ENCODE measurements at regions of chr16 and their contacts with region 1.

Region 1: DNA sequence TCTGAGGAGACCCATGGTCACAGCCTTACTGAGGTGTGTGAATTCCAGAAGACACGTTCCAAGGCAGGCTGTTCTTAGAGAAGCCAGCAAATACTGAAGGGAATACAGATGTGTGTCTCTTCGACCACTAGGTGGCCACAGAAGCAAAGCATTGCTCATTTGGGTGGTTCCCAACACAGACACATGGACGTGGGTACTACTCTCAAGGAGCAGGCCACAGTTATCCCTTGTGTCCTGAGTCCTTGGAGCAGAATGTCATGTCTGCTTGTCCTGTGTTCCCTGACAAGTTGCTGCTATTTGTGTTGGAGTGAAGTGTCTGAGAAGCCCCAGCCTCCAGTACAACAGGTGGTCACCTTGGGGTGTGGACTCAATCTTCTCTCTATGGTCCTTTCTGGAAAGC is 30.3 kb downstream of the HMOX2 start:
- DNase-seq: peak; percentile 66 to 73 (median 68)
- H3K4me3 ChIP-seq: peak overlapping the region in 1 of 2 donors; percentile 57
- H3K4me3 Mint-ChIP-seq: peak overlapping the region; percentile 49 to 94 (median 80)
- H3K27ac ChIP-seq: peak overlapping the region; percentile 77
- H3K27ac Mint-ChIP-seq: peak overlapping the region; percentile 96 to 100 (median 99)
- H3K4me1 ChIP-seq: peaks cover 67% of the 10 kb centered on the region
- H3K4me1 Mint-ChIP-seq: peaks cover 40 to 77% (median 60%) of the 10 kb centered on the region in 4 donors
- H3K27me3 ChIP-seq: no peaks in the 10 kb centered on the region
- H3K27me3 Mint-ChIP-seq: no peaks in the 10 kb centered on the region

Region 2: DNA sequence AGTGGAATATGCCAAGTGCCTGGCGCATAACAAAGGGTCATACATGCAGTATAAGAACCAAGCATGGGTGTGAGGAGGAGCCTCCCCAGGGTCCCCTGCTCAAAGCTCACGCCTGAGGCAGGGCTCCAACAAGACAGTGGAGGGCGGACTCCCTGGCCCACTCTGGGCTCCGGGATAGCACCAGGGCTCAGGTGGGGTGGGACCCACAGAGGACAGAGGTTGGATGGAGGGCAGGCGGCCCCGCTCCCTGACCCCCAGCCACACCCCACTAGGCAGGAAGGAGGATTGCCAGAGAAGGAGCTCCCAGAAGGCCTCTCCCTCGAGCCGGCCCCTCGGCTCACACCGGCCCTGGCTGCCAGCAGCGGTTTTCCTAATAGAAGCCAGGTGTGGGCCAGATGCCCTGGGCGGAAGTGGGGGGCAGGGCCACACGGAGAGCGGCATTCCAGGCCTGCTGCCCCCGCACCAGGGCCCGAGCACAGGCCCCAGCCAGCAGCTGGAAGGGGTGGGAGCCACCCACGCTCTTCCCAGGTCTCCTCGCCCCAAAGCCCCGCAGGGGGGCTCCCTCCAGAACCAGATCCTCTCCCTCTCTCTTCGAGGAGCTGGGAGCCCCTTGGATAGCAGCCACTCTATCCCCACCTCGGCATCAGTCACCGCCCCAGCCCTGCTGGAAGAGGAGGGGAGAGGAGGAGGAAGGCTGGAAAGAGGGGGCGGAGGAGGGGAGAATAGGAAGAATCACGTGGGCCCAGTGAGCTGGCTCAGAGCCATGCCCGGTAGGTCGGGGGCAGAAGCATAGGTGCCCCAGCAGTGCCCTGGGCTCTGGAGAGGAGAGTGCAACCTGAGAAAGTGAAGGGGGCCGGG is 113.8 kb before region 1 on chr16:
- CTCF ChIA-PET with region 1: no interaction called
- POLR2A ChIA-PET with region 1: no interaction called
- intact Hi-C with region 1: no loop called
- DNase-seq: no peak
- H3K4me3 ChIP-seq: no peak overlapping the region
- H3K4me3 Mint-ChIP-seq: no peak overlapping the region
- H3K27ac ChIP-seq: no peak overlapping the region
- H3K27ac Mint-ChIP-seq: peak overlapping the region in 3 of 7 donors; percentile 29 to 93 (median 68)
- H3K4me1 ChIP-seq: no peaks in the 10 kb centered on the region
- H3K4me1 Mint-ChIP-seq: peaks cover 4 to 11% (median 5%) of the 10 kb centered on the region in 4 donors
- H3K27me3 ChIP-seq: no peaks in the 10 kb centered on the region
- H3K27me3 Mint-ChIP-seq: no peaks in the 10 kb centered on the region

Region 3: GRCh38 chr16:4416200-4417032 is 90.0 kb before region 1 on chr16 and contains the start of gene CORO7:
- CTCF ChIA-PET with region 1: interaction called, 6 read pairs
- POLR2A ChIA-PET with region 1: interaction called, 32 read pairs
- intact Hi-C with region 1: no loop called
- DNase-seq: peak; percentile 99 to 100 (median 100)
- H3K4me3 ChIP-seq: peak within 1 kb of the TSS; percentile 75 to 81
- H3K4me3 Mint-ChIP-seq: peak within 1 kb of the TSS; percentile 91 to 99 (median 98)
- H3K27ac ChIP-seq: peak within 1 kb of the TSS; percentile 95
- H3K27ac Mint-ChIP-seq: peak within 1 kb of the TSS; percentile 94 to 100 (median 99)
- H3K4me1 ChIP-seq: peaks cover 38% of the 10 kb centered on the region
- H3K4me1 Mint-ChIP-seq: peaks cover 26 to 49% (median 37%) of the 10 kb centered on the region in 4 donors
- H3K27me3 ChIP-seq: no peaks in the 10 kb centered on the region
- H3K27me3 Mint-ChIP-seq: no peaks in the 10 kb centered on the region
- total RNA-seq, gene CORO7: 176 to 184 TPM

Region 4: DNA sequence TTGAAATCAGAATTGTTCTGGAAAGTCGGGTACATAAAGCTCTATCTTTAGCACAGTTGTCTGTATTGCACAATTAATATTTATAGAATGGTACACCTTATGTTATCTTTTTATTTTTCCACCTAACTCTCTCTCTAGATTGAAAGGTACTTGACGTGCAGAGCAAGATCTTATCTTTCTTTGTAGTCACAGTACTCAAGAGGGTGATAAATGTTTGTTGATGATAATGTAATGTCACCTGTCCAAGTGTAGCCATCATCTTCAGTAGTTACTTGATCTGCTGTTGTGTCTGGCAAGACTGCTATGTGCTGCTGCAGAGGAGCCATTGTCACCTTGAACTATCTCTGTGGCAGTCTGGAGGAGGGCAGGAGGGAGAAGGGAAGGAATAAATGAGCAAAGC is 24.9 kb before region 1 on chr16:
- CTCF ChIA-PET with region 1: interaction called, 343 read pairs
- POLR2A ChIA-PET with region 1: interaction called, 247 read pairs
- intact Hi-C with region 1: loop called (anchors 1 kb)
- DNase-seq: peak in 1 of 5 donors; percentile 18
- H3K4me3 ChIP-seq: no peak overlapping the region
- H3K4me3 Mint-ChIP-seq: peak overlapping the region in 7 of 8 donors; percentile 18 to 80 (median 58)
- H3K27ac ChIP-seq: peak overlapping the region; percentile 22
- H3K27ac Mint-ChIP-seq: peak overlapping the region; percentile 32 to 87 (median 86)
- H3K4me1 ChIP-seq: peaks cover 68% of the 10 kb centered on the region
- H3K4me1 Mint-ChIP-seq: peaks cover 39 to 60% (median 51%) of the 10 kb centered on the region in 4 donors
- H3K27me3 ChIP-seq: no peaks in the 10 kb centered on the region
- H3K27me3 Mint-ChIP-seq: no peaks in the 10 kb centered on the region

Region 5: DNA sequence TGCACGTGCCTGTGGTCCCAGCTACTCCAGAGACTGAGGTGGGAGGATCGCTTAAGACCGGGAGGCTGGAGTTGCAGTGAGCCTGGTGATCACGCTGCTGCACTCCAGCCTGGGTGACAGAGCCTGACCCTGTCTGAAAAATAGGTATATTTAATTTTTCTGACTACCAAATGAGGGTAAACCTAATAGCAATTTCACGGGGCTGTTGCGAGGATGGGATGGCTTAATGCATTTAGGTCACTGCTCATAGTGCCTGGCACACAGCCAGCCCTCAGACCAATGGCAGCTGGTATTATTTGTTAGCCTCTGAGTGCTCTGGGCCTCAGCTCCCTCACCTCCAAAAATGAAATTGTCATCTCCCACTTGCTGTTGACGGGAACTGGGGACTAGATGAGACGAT is 38.0 kb after region 1 on chr16:
- CTCF ChIA-PET with region 1: interaction called, 203 read pairs
- POLR2A ChIA-PET with region 1: interaction called, 36 read pairs
- intact Hi-C with region 1: loop called (anchors 1 kb)
- DNase-seq: no peak
- H3K4me3 ChIP-seq: no peak overlapping the region
- H3K4me3 Mint-ChIP-seq: no peak overlapping the region
- H3K27ac ChIP-seq: no peak overlapping the region
- H3K27ac Mint-ChIP-seq: no peak overlapping the region
- H3K4me1 ChIP-seq: peaks cover 6% of the 10 kb centered on the region
- H3K4me1 Mint-ChIP-seq: peaks cover 2 to 7% (median 4%) of the 10 kb centered on the region in 4 donors
- H3K27me3 ChIP-seq: no peaks in the 10 kb centered on the region
- H3K27me3 Mint-ChIP-seq: no peaks in the 10 kb centered on the region

Region 6: GRCh38 chr16:4586291-4586690 is 79.8 kb after region 1 on chr16:
- CTCF ChIA-PET with region 1: interaction called, 57 read pairs
- POLR2A ChIA-PET with region 1: interaction called, 13 read pairs
- intact Hi-C with region 1: loop called (anchors 1 kb)
- DNase-seq: no peak
- H3K4me3 ChIP-seq: no peak overlapping the region
- H3K4me3 Mint-ChIP-seq: no peak overlapping the region
- H3K27ac ChIP-seq: no peak overlapping the region
- H3K27ac Mint-ChIP-seq: no peak overlapping the region
- H3K4me1 ChIP-seq: no peaks in the 10 kb centered on the region
- H3K4me1 Mint-ChIP-seq: peaks cover 0 to 4% (median 3%) of the 10 kb centered on the region in 4 donors
- H3K27me3 ChIP-seq: peaks cover 3% of the 10 kb centered on the region
- H3K27me3 Mint-ChIP-seq: peaks cover 4 to 6% of the 10 kb centered on the region in 2 donors

Region 7: GRCh38 chr16:4957720-4958509 is 451.5 kb after region 1 on chr16 and contains the start of gene SEC14L5:
- CTCF ChIA-PET with region 1: no interaction called
- POLR2A ChIA-PET with region 1: no interaction called
- intact Hi-C with region 1: loop called (anchors 1 kb)
- DNase-seq: peak; percentile 86 to 96 (median 89)
- H3K4me3 ChIP-seq: peak within 1 kb of the TSS; percentile 23 to 45
- H3K4me3 Mint-ChIP-seq: peak within 1 kb of the TSS; percentile 78 to 92 (median 86)
- H3K27ac ChIP-seq: no peak within 1 kb of the TSS
- H3K27ac Mint-ChIP-seq: peak within 1 kb of the TSS; percentile 1 to 77 (median 57)
- H3K4me1 ChIP-seq: peaks cover 16% of the 10 kb centered on the region
- H3K4me1 Mint-ChIP-seq: peaks cover 12 to 28% (median 20%) of the 10 kb centered on the region in 4 donors
- H3K27me3 ChIP-seq: peaks cover 11% of the 10 kb centered on the region
- H3K27me3 Mint-ChIP-seq: peaks cover 21 to 30% of the 10 kb centered on the region in 2 donors
- total RNA-seq, gene SEC14L5: not detected

Measured in CD4-positive, alpha-beta memory T cell (primary cell).